ENCODE measurements at regions of chr17 and their contacts with region 1.

Region 1: GRCh38 chr17:39318636-39319035 is 82.8 kb downstream of the FBXL20 start:
- DNase-seq: no peak
- ATAC-seq: no peak
- H3K4me3 ChIP-seq: no peak overlapping the region
- H3K27ac ChIP-seq: no peak overlapping the region
- H3K4me1 ChIP-seq: peaks cover 2% of the 10 kb centered on the region; the same call in 1 of the 2 replicates
- H3K27me3 ChIP-seq: no peaks in the 10 kb centered on the region
- CTCF ChIP-seq: no peak
- POLR2A ChIP-seq: no peak
- RAD21 ChIP-seq: no peak

Region 2: DNA sequence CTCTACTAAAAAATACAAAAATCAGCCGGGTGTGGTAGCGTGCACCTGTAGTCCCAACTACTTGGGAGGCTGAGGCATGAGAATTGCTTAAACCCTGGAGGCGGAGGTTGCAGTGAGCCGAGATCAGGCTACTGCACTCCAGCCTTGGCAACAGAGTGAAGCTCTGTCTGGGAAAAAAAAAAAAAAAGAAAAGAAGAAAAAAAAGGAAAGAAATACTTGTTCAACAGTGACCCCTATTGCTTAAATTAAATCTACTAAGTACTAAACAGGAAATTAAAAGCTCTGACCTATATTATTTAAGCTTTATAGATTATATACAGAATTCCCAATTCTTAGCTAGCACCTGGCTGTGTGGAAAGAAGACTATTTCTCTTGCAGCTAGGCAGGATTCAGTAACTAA is 33.9 kb after region 1 on chr17:
- CTCF ChIA-PET with region 1: no interaction called
- POLR2A ChIA-PET with region 1: no interaction called
- dilution Hi-C with region 1: no loop called
- in situ Hi-C with region 1: no loop called
- intact Hi-C with region 1: loop called (anchors 5 kb)
- DNase-seq: no peak
- ATAC-seq: no peak
- H3K4me3 ChIP-seq: no peak overlapping the region
- H3K27ac ChIP-seq: no peak overlapping the region
- H3K4me1 ChIP-seq: no peaks in the 10 kb centered on the region
- H3K27me3 ChIP-seq: no peaks in the 10 kb centered on the region
- CTCF ChIP-seq: 0 out of 2 replicates have a peak, but pooled peaks have one; percentile 18
- POLR2A ChIP-seq: no peak
- RAD21 ChIP-seq: no peak

Region 3: GRCh38 chr17:39573447-39574298 is 255.0 kb after region 1 on chr17:
- CTCF ChIA-PET with region 1: no interaction called
- POLR2A ChIA-PET with region 1: no interaction called
- dilution Hi-C with region 1: no loop called
- in situ Hi-C with region 1: no loop called
- intact Hi-C with region 1: no loop called
- DNase-seq: peak; percentile 58
- ATAC-seq: peak; percentile 98
- H3K4me3 ChIP-seq: peak overlapping the region; percentile 65
- H3K27ac ChIP-seq: peak overlapping the region; percentile 64
- H3K4me1 ChIP-seq: no peaks in the 10 kb centered on the region
- H3K27me3 ChIP-seq: peaks cover 10% of the 10 kb centered on the region
- CTCF ChIP-seq: no peak
- POLR2A ChIP-seq: no peak
- RAD21 ChIP-seq: no peak